ENCODE measurements at regions of chr4 and their contacts with region 1.

Region 1: GRCh38 chr4:86921608-86922252 is 13.1 kb upstream of the AFF1 start:
- DNase-seq: no peak
- H3K4me3 Mint-ChIP-seq: no peak overlapping the region
- H3K27ac Mint-ChIP-seq: no peak overlapping the region
- H3K4me1 Mint-ChIP-seq: peaks cover 22% of the 10 kb centered on the region
- H3K27me3 Mint-ChIP-seq: no peaks in the 10 kb centered on the region
- CTCF ChIP-seq: no peak

Region 2: DNA sequence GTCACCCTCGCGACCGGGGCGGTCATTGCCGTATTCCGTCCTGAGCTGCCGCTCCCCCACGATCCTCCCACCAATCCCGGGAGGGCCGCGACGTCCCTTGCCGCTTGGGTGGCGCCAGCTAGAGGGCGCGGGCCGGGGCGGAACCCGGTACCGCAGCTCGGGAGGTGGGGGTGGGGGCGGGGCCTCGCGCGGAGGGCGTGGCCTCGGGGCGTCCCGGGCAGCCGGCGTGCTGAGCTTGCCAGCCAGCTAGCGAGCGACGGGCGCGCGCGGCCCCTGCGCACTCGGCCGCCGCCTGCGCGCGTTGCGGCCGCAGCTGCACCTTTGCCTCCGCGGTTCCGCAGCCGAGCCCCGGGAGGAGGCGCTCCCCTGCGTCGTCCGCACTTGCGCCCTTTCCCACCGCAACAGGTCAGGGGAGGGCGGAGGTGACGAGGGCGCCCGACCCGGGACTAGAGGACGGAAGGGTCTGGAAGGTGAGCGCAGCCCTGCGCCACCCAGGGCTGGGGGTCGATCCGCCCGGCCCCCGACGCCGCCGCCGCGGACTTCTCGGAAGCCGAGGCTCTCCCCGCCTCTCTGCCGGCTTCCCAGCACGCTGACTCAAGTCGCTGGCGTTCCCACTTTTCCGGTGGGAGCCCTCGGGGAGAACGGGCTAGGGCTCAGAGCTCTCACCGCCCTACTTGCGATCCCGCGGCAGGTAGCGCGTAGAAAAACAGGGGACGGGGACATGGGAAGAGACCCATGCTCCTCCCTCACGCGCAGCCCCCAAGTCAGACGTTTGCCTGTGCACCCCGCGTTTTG is 13.2 kb after region 1 on chr4 and contains the start of gene AFF1:
- CTCF ChIA-PET with region 1: interaction called, 11 read pairs
- intact Hi-C with region 1: no loop called
- DNase-seq: peak; percentile 88
- H3K4me3 Mint-ChIP-seq: peak within 1 kb of the TSS; percentile 91
- H3K27ac Mint-ChIP-seq: peak within 1 kb of the TSS; percentile 96
- H3K4me1 Mint-ChIP-seq: peaks cover 18% of the 10 kb centered on the region
- H3K27me3 Mint-ChIP-seq: no peaks in the 10 kb centered on the region
- CTCF ChIP-seq: no peak
- total RNA-seq, gene AFF1: 37.7 and 40.2 TPM in 2 replicates

Region 3: GRCh38 chr4:87093443-87094123 is 171.9 kb after region 1 on chr4:
- CTCF ChIA-PET with region 1: interaction called, 27 read pairs
- intact Hi-C with region 1: loop called (anchors 2 kb)
- DNase-seq: peak; percentile 25
- H3K4me3 Mint-ChIP-seq: no peak overlapping the region
- H3K27ac Mint-ChIP-seq: no peak overlapping the region
- H3K4me1 Mint-ChIP-seq: peaks cover 25% of the 10 kb centered on the region
- H3K27me3 Mint-ChIP-seq: no peaks in the 10 kb centered on the region
- CTCF ChIP-seq: peak; percentile 41

Region 4: GRCh38 chr4:87235020-87235671 is 313.4 kb after region 1 on chr4:
- CTCF ChIA-PET with region 1: no interaction called
- intact Hi-C with region 1: loop called (anchors 1 kb)
- DNase-seq: no peak
- H3K4me3 Mint-ChIP-seq: peak overlapping the region; percentile 66
- H3K27ac Mint-ChIP-seq: no peak overlapping the region
- H3K4me1 Mint-ChIP-seq: peaks cover 7% of the 10 kb centered on the region
- H3K27me3 Mint-ChIP-seq: no peaks in the 10 kb centered on the region
- CTCF ChIP-seq: no peak

Measured in Calu3 (cell line).